CD8-positive, alpha-beta T cell (primary cell): ENCODE measurements at regions of chr22 and their contacts with region 1.

Region 1: GRCh38 chr22:37186228-37186996 is 1.6 kb downstream of the C1QTNF6 start:
- DNase-seq: peak in 7 of 9 experiments; percentile 41 to 93 (median 60)
- ATAC-seq: peak; percentile 89
- H3K4me3 ChIP-seq: peak overlapping the region; percentile 13 to 16
- H3K4me3 Mint-ChIP-seq: peak overlapping the region; percentile 72
- H3K27ac ChIP-seq: peak overlapping the region; percentile 38 to 47
- H3K27ac Mint-ChIP-seq: peak overlapping the region; percentile 80
- H3K4me1 ChIP-seq: peaks cover 65% of the 10 kb centered on the region
- H3K4me1 Mint-ChIP-seq: peaks cover 60% of the 10 kb centered on the region
- H3K27me3 ChIP-seq: no peaks in the 10 kb centered on the region
- H3K27me3 Mint-ChIP-seq: no peaks in the 10 kb centered on the region
- CTCF ChIP-seq: no peak

Region 2: DNA sequence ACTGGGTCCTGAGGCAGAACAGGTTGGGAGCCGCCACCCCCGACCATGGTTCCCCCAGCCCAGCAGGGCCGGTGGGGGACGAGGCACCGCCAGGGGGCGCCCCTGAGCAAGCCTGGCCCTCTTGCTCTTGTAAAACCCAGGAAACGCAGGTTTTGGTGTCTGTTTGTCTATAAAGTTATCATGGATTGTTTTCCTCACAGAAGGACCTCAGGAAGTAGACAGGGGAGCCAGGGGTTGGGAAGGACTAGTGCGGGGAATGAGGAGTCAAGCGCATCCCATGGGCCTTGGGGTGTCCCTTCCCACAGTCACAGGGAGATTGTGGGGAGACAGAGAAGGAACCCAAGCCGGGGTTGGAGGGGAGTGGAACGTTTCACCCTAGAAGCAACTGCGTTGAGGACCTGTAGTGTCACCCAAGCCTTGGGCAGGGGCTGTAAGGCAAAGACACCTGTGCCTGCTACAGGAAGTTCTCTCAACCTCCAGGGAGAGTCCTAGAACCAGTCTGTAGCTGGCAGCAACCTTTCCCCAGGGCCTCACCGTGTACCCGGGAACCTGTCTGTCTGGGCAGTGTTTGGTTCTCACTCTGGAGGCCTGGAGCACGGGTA is 108.4 kb before region 1 on chr22:
- CTCF ChIA-PET with region 1: interaction called, 10 read pairs
- POLR2A ChIA-PET with region 1: interaction called, 4 read pairs
- intact Hi-C with region 1: no loop called
- DNase-seq: peak; percentile 68 to 93 (median 83)
- ATAC-seq: peak; percentile 14
- H3K4me3 ChIP-seq: no peak overlapping the region
- H3K4me3 Mint-ChIP-seq: peak overlapping the region; percentile 47
- H3K27ac ChIP-seq: peak overlapping the region in 1 of 2 experiments; percentile 51
- H3K27ac Mint-ChIP-seq: peak overlapping the region; percentile 99
- H3K4me1 ChIP-seq: peaks cover 39% of the 10 kb centered on the region
- H3K4me1 Mint-ChIP-seq: peaks cover 31% of the 10 kb centered on the region
- H3K27me3 ChIP-seq: no peaks in the 10 kb centered on the region
- H3K27me3 Mint-ChIP-seq: peaks cover 3% of the 10 kb centered on the region
- CTCF ChIP-seq: peak; percentile 98

Region 3: GRCh38 chr22:37330200-37331033 is 144.0 kb after region 1 on chr22:
- CTCF ChIA-PET with region 1: no interaction called
- POLR2A ChIA-PET with region 1: no interaction called
- intact Hi-C with region 1: no loop called
- DNase-seq: peak in 2 of 9 experiments; percentile 38 to 58
- ATAC-seq: no peak
- H3K4me3 ChIP-seq: no peak overlapping the region
- H3K4me3 Mint-ChIP-seq: no peak overlapping the region
- H3K27ac ChIP-seq: no peak overlapping the region
- H3K27ac Mint-ChIP-seq: no peak overlapping the region
- H3K4me1 ChIP-seq: peaks cover 5% of the 10 kb centered on the region
- H3K4me1 Mint-ChIP-seq: peaks cover 7% of the 10 kb centered on the region
- H3K27me3 ChIP-seq: peaks cover 25 to 29% of the 10 kb centered on the region in 2 experiments
- H3K27me3 Mint-ChIP-seq: peaks cover 52% of the 10 kb centered on the region
- CTCF ChIP-seq: no peak